ENCODE measurements at regions of chr10 and their contacts with region 1.

Region 1: GRCh38 chr10:69716711-69717560 is 84.8 kb upstream of the COL13A1 start:
- DNase-seq: peak; percentile 71
- H3K4me3 ChIP-seq: no peak overlapping the region
- H3K27ac ChIP-seq: no peak overlapping the region
- H3K4me1 ChIP-seq: no peaks in the 10 kb centered on the region
- H3K27me3 ChIP-seq: no peaks in the 10 kb centered on the region
- CTCF ChIP-seq: peak; percentile 63

Region 2: DNA sequence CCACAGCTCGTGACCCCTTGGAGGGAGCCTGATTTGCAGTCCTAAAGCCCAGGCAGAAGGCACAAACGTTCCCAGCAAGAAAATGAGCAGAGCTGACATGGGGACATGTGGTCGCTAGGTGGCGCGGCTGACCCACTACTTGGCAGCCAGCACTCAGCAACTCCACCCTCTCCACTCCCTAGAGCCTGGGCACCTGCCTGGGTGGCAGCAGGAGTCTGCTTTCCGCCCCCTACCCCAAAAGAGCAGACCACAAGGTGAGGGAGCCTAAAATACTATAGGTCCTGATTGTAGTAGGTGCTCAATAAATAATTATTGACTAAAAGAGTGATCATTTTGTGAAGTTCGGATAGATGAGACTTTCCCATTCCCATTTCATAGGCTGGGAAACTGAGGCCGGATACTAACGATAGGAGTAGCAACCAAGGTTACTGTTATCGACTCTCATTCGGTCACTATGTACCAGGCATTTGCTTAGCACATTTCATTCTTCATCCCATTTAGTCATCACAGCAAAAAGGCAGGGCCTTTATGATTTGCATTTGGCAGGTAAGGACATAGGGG is 201.2 kb before region 1 on chr10:
- intact Hi-C with region 1: loop called (anchors 5 kb)
- DNase-seq: peak; percentile 78
- H3K4me3 ChIP-seq: no peak overlapping the region
- H3K27ac ChIP-seq: no peak overlapping the region
- H3K4me1 ChIP-seq: no peaks in the 10 kb centered on the region
- H3K27me3 ChIP-seq: no peaks in the 10 kb centered on the region
- CTCF ChIP-seq: peak; percentile 83

Region 3: GRCh38 chr10:69644658-69645295 is 72.2 kb before region 1 on chr10:
- intact Hi-C with region 1: loop called (anchors 1 kb)
- DNase-seq: peak; percentile 57
- H3K4me3 ChIP-seq: no peak overlapping the region
- H3K27ac ChIP-seq: no peak overlapping the region
- H3K4me1 ChIP-seq: no peaks in the 10 kb centered on the region
- H3K27me3 ChIP-seq: no peaks in the 10 kb centered on the region
- CTCF ChIP-seq: peak; percentile 76

Measured in colonic mucosa (tissue), 4 donors.